A673 (cell line): ENCODE measurements at regions of chr2 and their contacts with region 1.

Region 1: GRCh38 chr2:227132986-227133385 is 31.0 kb downstream of the COL4A4 start:
- DNase-seq: no peak
- H3K4me3 ChIP-seq: no peak overlapping the region
- H3K27ac ChIP-seq: no peak overlapping the region
- H3K4me1 ChIP-seq: no peaks in the 10 kb centered on the region
- H3K27me3 ChIP-seq: no peaks in the 10 kb centered on the region
- CTCF ChIP-seq: no peak

Region 2: GRCh38 chr2:227238238-227239237 is 105.6 kb after region 1 on chr2:
- CTCF ChIA-PET with region 1: interaction called, 9 read pairs
- POLR2A ChIA-PET with region 1: no interaction called
- intact Hi-C with region 1: loop called (anchors 1 kb)
- DNase-seq: peak; percentile 71
- H3K4me3 ChIP-seq: no peak overlapping the region
- H3K27ac ChIP-seq: no peak overlapping the region
- H3K4me1 ChIP-seq: no peaks in the 10 kb centered on the region
- H3K27me3 ChIP-seq: no peaks in the 10 kb centered on the region
- CTCF ChIP-seq: peak; percentile 98

Region 3: DNA sequence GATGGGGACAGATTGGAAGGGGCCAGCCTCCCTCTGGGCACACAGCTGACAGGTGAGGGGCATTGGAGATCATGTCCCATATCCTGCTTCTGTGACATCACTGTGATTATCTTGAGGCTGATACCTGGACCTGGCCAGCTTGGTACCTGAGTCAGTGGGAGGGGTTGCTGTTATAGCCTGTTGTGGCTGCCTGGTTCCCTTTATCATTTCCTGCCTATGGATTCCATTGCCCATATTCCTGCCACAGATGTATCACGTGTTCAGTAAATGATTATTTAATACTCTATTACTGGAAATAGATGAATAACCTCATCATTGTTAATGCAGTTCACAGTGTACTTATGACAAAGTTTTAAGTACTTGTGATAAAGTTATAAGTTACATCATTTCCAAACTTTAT is 262.6 kb after region 1 on chr2:
- CTCF ChIA-PET with region 1: no interaction called
- POLR2A ChIA-PET with region 1: no interaction called
- intact Hi-C with region 1: loop called (anchors 10 kb)
- DNase-seq: no peak
- H3K4me3 ChIP-seq: no peak overlapping the region
- H3K27ac ChIP-seq: no peak overlapping the region
- H3K4me1 ChIP-seq: no peaks in the 10 kb centered on the region
- H3K27me3 ChIP-seq: no peaks in the 10 kb centered on the region
- CTCF ChIP-seq: no peak

Region 4: GRCh38 chr2:227766373-227766883 is 633.4 kb after region 1 on chr2:
- CTCF ChIA-PET with region 1: interaction called, 3 read pairs
- POLR2A ChIA-PET with region 1: no interaction called
- intact Hi-C with region 1: loop called (anchors 5 kb)
- DNase-seq: peak; percentile 79
- H3K4me3 ChIP-seq: no peak overlapping the region
- H3K27ac ChIP-seq: no peak overlapping the region
- H3K4me1 ChIP-seq: peaks cover 9% of the 10 kb centered on the region
- H3K27me3 ChIP-seq: no peaks in the 10 kb centered on the region
- CTCF ChIP-seq: peak; percentile 92

Region 5: DNA sequence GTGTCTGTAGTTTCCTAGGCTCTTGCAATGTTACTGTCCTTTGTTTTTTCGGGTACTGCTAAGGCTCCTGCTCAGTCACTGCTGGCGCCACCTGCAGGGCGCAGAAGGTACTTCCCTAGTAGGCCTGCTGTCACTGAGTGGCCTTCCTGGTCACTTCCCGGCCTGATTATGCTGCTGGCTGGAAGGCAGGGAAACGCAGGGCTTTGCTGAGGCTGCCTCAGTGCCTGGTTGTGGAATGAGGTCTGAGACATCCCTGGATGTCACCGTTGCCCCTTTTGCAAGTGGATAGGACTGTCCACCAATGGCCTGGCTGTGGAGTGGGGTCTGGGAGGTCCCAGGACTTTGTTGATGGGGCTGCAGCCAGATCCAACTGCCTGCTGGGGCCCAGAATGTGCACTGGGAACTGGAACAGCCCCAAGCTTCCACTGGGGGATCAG is 751.5 kb after region 1 on chr2:
- CTCF ChIA-PET with region 1: no interaction called
- POLR2A ChIA-PET with region 1: no interaction called
- intact Hi-C with region 1: loop called (anchors 2 kb)
- DNase-seq: peak; percentile 80
- H3K4me3 ChIP-seq: no peak overlapping the region
- H3K27ac ChIP-seq: no peak overlapping the region
- H3K4me1 ChIP-seq: peaks cover 6% of the 10 kb centered on the region
- H3K27me3 ChIP-seq: no peaks in the 10 kb centered on the region
- CTCF ChIP-seq: peak; percentile 92